ENCODE measurements at regions of chr6 and their contacts with region 1.

Region 1: GRCh38 chr6:152642989-152643388 is 5.8 kb upstream of the SYNE1 start:
- DNase-seq: peak; percentile 89
- H3K4me3 ChIP-seq: no peak overlapping the region
- H3K27ac ChIP-seq: no peak overlapping the region
- H3K4me1 ChIP-seq: peaks cover 0 to 3% (median 0%) of the 10 kb centered on the region in 6 donors
- H3K27me3 ChIP-seq: peaks cover 0 to 11% (median 0%) of the 10 kb centered on the region in 7 donors
- CTCF ChIP-seq: peak in 9 of 11 experiments; percentile 36 to 75 (median 62)
- POLR2A ChIP-seq: no peak

Region 2: GRCh38 chr6:152502421-152503188 is 140.4 kb before region 1 on chr6:
- intact Hi-C with region 1: no loop called
- DNase-seq: no peak
- H3K4me3 ChIP-seq: no peak overlapping the region
- H3K27ac ChIP-seq: no peak overlapping the region
- H3K4me1 ChIP-seq: no peaks in the 10 kb centered on the region
- H3K27me3 ChIP-seq: no peaks in the 10 kb centered on the region
- CTCF ChIP-seq: no peak
- POLR2A ChIP-seq: no peak

Region 3: DNA sequence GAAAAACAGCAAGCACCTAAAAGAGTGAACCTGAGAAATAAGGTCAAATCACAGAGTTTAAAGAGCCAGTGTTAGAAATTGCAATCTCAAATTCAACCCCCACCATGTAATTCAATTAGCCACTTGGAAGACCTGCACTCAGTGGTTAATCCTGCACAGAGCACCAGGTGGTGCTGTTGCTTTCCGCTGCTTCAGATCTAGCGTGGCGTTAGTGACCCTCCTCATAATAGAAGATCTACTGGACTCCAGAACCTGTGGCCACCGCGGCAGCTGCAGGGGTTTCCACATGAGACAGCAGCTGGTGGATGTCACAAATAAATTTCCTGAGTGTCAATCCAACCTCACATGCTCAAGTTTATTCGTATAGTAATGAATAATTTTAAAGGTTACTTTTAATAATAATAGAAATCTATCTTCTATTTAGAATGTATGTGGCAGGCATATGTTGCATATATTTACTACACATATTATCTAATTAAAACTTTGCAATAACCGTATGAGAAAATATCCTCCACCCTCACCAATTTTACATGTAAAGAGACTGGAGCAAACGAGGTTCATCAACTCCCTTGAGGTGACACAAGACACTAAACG is 90.3 kb before region 1 on chr6:
- intact Hi-C with region 1: loop called (anchors 5 kb)
- DNase-seq: peak; percentile 85
- H3K4me3 ChIP-seq: no peak overlapping the region
- H3K27ac ChIP-seq: no peak overlapping the region
- H3K4me1 ChIP-seq: peaks cover 0 to 24% (median 5%) of the 10 kb centered on the region in 6 donors
- H3K27me3 ChIP-seq: no peaks in the 10 kb centered on the region
- CTCF ChIP-seq: peak; percentile 62 to 86 (median 80)
- POLR2A ChIP-seq: no peak

Measured in spleen (tissue), 13 donors.